Left colon (tissue), 2 donors: ENCODE measurements at regions of chr1 and their contacts with region 1.

Region 1: DNA sequence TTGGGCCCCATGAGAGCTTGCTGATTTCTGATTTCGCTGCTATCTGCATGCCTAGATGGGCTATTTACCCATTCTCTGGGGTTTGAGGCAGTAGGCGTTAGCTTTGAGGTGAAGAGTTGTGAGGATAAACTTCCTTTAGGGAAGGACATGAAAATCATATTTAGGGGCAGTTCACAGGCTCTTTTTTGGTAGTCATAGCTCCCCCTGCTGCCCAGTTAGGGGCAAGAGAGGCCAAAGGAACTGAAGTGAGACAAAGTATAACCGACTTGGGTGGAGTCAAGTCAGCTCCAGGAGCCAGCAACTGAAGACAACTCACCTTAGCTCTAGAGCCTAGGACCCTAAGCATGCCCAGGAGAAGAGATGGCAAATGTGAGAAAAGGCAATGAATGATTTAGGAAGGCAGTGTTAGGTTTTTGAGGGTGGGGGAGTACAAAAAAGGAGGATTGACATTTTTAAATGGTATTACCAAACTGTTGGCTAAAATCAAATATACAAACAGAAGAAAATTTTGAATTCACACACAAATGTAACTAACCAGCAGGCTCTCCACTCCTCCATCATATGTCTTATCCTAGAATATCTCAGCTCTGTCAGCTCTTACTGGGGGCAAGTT is 625.2 kb downstream of the LMO4 start:
- DNase-seq: peak; percentile 48 to 75
- ATAC-seq: peak; percentile 95

Region 2: GRCh38 chr1:87292684-87293493 is 660.9 kb before region 1 on chr1:
- intact Hi-C with region 1: loop called in 1 of 2 experiments (anchors 10 kb)
- DNase-seq: peak; percentile 30 to 70
- ATAC-seq: no peak

Region 3: DNA sequence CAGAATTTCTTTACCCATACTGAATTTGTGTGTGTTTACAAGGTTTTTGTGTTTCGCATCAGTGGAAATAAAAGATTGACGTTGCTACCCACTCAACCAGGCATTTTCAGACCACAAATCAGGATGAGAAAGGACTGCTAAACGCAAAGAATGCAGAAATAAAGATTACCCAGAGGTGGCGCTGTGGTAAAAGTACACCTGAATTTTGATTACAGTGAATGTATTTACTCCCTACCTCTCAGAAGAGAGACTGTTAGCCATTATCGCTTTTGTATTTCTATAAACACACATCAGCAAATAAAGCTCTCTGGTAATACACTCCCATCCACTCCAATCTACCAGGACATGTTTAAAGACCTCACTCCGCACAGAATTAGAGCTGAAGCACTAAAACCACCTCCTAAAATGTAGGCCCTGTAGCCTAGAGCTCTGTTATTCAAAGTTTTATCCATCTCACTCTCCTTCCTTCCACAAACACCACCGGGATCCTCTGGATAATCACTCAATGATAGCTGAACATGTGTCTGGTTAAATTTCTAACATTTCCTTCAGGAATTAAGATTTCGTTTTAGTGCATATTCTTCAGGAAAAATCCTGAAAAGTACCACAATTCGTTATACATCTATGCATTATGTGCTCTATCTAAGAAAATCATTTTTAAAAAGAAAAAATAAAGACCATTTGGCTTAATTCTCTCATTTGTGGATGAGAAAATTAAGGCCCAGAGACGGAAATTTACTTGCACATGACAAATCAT is 627.7 kb before region 1 on chr1:
- intact Hi-C with region 1: loop called in 1 of 2 experiments (anchors 2 kb)
- DNase-seq: no peak
- ATAC-seq: no peak

Region 4: GRCh38 chr1:88141499-88142074 is 187.7 kb after region 1 on chr1:
- intact Hi-C with region 1: no loop called
- DNase-seq: peak in 1 of 2 donors; percentile 3
- ATAC-seq: peak; percentile 40